WTC11 (cell line): ENCODE measurements at regions of chr5 and their contacts with region 1.

Region 1: DNA sequence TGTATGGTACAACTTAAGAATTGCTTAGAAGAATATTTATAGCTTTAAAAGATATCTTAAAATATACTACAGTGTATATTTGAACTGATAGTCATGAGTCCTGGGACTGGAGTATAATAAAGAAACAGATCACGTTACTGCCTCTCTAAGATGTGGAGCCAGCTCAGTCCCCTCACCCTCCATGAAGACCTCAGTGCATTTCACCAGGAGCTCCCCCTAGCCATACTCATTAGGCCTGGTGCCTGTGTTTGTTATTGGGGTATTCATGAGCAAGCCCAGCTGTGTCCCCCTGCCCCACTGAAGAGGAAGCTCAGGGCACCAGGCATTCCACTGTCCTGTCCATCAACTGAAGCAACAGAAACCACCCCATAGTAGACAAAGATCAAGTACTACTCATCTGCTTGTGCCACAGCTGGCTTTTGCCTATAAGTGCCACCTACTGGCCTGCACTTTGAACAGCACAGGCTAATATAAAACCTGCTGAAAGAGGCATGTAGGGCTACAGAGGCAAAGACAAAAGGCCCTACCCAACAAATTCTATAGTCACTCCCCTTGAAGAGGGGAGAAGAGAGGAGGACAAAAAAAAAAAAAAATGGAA is 850.2 kb upstream of the NUDT12 start:
- DNase-seq: peak; percentile 43
- ATAC-seq: peak; percentile 99
- H3K4me3 Mint-ChIP-seq: no peak overlapping the region
- H3K27ac Mint-ChIP-seq: no peak overlapping the region
- H3K4me1 Mint-ChIP-seq: peaks cover 13% of the 10 kb centered on the region
- H3K27me3 Mint-ChIP-seq: no peaks in the 10 kb centered on the region
- CTCF ChIP-seq: peak; percentile 26; the same call in 1 of the 2 replicates

Region 2: GRCh38 chr5:104283136-104283535 is 129.6 kb before region 1 on chr5:
- CTCF ChIA-PET with region 1: no interaction called
- POLR2A ChIA-PET with region 1: no interaction called
- DNase-seq: no peak
- ATAC-seq: no peak
- H3K4me3 Mint-ChIP-seq: no peak overlapping the region
- H3K27ac Mint-ChIP-seq: no peak overlapping the region
- H3K4me1 Mint-ChIP-seq: no peaks in the 10 kb centered on the region
- H3K27me3 Mint-ChIP-seq: no peaks in the 10 kb centered on the region
- CTCF ChIP-seq: no peak

Region 3: GRCh38 chr5:104431002-104431620 is 18.4 kb after region 1 on chr5:
- CTCF ChIA-PET with region 1: interaction called, 14 read pairs
- POLR2A ChIA-PET with region 1: no interaction called
- DNase-seq: no peak
- ATAC-seq: no peak
- H3K4me3 Mint-ChIP-seq: no peak overlapping the region
- H3K27ac Mint-ChIP-seq: no peak overlapping the region
- H3K4me1 Mint-ChIP-seq: no peaks in the 10 kb centered on the region
- H3K27me3 Mint-ChIP-seq: no peaks in the 10 kb centered on the region
- CTCF ChIP-seq: no peak